Ascending aorta (tissue), 2 donors: ENCODE measurements at regions of chr7 and their contacts with region 1.

Region 1: DNA sequence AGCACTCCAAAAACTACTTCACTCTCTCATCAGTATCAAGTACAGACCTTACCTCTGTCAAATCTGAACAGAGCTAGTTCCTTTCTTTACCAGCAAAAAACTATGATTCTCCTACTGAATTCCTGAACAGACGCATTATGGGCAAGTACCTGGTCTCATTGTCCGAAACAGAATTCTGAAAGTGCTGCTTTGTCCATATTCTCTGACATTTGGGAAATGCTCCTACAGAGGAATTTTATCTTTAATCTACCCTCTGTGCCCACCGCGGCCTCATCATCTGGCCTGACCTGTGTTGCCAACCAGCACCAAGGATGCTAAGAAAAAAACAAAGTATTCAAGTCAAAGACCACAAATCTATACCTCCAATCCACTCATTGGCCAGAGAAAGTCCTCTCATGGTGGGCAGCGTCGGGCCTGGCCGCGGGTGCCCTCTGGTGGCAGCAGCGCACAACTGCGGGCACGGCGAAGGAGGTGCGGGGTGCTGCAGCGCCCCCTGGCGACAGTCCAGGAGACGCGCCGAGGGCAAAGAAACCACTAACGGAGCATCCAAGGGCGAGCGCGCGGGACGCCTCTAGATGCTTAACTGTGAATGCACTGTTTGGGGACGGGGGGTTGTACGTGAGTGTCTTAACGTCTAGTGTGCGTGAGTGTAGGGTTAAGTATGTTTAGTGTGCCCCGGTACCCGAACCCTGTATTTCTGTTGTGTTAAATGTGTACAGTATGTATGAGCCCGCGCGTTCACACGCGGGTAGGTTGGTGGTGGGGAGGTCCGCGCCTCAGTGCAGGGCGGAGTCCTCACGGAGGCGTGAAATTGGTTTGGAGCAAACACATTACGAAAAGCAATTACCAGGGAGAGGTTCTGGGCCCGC is 5.0 kb upstream of the GBX1 start:
- DNase-seq: peak in 1 of 2 donors; percentile 86
- H3K4me3 ChIP-seq: no peak overlapping the region
- H3K27ac ChIP-seq: no peak overlapping the region
- H3K4me1 ChIP-seq: peaks cover 0 to 4% of the 10 kb centered on the region in 2 donors
- H3K27me3 ChIP-seq: peaks cover 11% of the 10 kb centered on the region
- CTCF ChIP-seq: peak; percentile 99 to 100 (median 100)

Region 2: GRCh38 chr7:150903606-150904005 is 268.9 kb before region 1 on chr7:
- intact Hi-C with region 1: loop called (anchors 10 kb)
- DNase-seq: peak in 1 of 2 donors; percentile 86
- H3K4me3 ChIP-seq: no peak overlapping the region
- H3K27ac ChIP-seq: peak overlapping the region; percentile 31 to 50
- H3K4me1 ChIP-seq: peaks cover 0 to 8% of the 10 kb centered on the region in 2 donors
- H3K27me3 ChIP-seq: no peaks in the 10 kb centered on the region
- CTCF ChIP-seq: no peak

Region 3: GRCh38 chr7:151032936-151033863 is 139.3 kb before region 1 on chr7:
- intact Hi-C with region 1: no loop called
- DNase-seq: no peak
- H3K4me3 ChIP-seq: no peak overlapping the region
- H3K27ac ChIP-seq: no peak overlapping the region
- H3K4me1 ChIP-seq: peaks cover 0 to 7% of the 10 kb centered on the region in 2 donors
- H3K27me3 ChIP-seq: no peaks in the 10 kb centered on the region
- CTCF ChIP-seq: no peak

Region 4: DNA sequence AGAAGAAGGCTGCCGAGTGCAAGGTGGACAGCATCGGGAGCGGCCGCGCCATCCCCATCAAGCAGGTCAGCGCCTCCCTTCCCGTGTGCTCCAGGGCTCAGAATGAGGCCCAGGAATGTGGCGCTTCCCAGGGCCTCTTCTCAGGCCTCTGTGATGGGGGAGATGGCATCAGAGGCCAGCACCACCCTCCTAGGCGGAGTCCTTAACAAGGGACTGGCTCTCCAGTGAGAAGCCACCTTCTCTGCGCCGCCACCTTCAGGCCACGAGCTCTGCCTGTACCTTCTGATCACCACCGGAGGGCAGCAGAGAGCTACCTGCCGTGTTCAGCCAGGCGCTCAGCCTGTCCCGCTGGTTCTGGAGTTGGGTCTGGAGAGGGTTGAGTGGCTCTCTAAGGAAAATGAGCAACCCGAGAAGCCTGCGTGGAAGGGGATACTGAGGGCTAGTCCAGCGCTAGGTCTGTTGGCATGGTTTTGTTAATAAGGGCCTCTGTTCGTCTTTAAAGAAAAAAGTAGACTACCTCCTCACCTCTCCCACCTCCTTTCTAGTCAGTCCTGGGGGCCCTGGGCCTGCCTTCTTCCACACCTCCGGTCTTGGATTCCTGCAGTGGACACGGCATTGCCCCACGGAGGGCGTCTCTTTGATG is 48.6 kb before region 1 on chr7:
- intact Hi-C with region 1: loop called (anchors 1 kb)
- DNase-seq: peak; percentile 22 to 88
- H3K4me3 ChIP-seq: no peak overlapping the region
- H3K27ac ChIP-seq: no peak overlapping the region
- H3K4me1 ChIP-seq: peaks cover 3 to 5% of the 10 kb centered on the region in 2 donors
- H3K27me3 ChIP-seq: no peaks in the 10 kb centered on the region
- CTCF ChIP-seq: peak; percentile 89 to 98 (median 98)

Region 5: DNA sequence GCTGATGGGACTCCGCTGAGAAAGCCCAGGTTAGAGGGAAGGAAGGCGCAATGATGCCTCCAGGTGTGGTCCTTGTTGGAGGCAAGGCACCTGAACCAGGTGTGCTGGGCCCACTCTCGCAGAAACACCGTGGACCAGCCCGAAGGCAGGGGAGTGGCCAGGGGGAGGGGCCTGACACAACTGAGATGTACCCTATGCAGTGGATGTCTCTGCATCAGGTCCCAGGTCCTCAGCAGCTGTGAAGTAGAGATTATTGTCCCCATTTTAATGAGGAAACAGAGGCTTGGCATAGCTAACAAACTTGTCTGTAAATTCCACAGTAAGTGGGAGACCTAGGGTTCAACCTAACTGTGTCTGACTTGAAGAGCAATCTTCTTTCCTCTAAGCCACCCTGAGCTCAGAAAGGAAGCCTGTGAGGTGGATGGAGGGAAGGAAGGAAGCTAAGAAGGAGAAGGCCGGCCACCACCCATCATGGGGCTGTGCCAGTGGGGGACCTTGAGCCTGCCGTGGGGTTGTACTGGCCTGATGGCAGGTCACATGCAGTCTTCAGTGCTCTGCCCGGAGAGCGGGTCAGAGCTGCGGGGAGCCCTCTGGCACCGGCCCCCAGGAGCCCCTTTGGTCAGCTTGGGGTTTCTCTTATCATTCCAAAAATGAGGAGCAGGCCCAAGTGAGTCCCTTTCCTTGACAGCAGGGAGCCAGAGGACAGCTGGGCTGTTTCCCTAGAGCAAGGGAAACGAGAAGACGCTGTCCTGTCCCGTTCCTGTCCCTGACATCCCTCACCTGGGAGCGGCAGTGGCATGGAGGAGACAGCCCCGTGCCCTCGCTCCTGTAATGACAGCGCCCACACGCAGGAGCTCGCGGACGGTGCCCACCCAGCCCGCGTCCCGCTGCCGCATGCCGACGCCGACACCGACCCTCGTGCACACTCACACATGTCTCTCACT is 36.7 kb before region 1 on chr7:
- intact Hi-C with region 1: no loop called
- DNase-seq: no peak
- H3K4me3 ChIP-seq: no peak overlapping the region
- H3K27ac ChIP-seq: no peak overlapping the region
- H3K4me1 ChIP-seq: no peaks in the 10 kb centered on the region
- H3K27me3 ChIP-seq: no peaks in the 10 kb centered on the region
- CTCF ChIP-seq: no peak

Region 6: GRCh38 chr7:152501496-152501895 is 1329.0 kb after region 1 on chr7:
- intact Hi-C with region 1: no loop called
- DNase-seq: no peak
- H3K4me3 ChIP-seq: no peak overlapping the region
- H3K27ac ChIP-seq: no peak overlapping the region
- H3K4me1 ChIP-seq: no peaks in the 10 kb centered on the region
- H3K27me3 ChIP-seq: no peaks in the 10 kb centered on the region
- CTCF ChIP-seq: no peak